Mammary epithelial cell (primary cell): ENCODE measurements at regions of chr14 and their contacts with region 1.

Region 1: DNA sequence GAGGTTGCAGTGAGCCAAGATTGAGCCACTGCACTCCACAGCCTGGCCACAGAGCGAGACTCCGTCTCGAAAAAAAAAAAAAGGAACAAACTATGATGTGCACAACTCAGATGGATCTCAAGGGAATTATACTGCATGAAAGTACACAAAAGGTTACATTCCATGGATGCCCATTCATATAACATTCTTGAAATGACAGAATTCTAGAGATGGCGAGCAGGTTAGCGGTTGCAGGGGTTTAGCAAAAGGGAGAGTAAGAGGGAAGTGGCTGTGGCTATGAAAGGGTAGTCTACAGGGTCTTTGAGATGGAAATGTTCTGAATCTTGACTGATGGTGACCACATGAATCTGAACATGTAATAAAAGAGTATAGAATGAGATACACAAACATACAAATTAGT is 49.7 kb downstream of the CKB start:
- DNase-seq: no peak
- H3K4me3 ChIP-seq: no peak overlapping the region
- H3K27ac ChIP-seq: no peak overlapping the region
- H3K4me1 ChIP-seq: no peaks in the 10 kb centered on the region
- H3K27me3 ChIP-seq: no peaks in the 10 kb centered on the region
- CTCF ChIP-seq: no peak

Region 2: GRCh38 chr14:102524466-102525218 is 948.3 kb before region 1 on chr14:
- CTCF ChIA-PET with region 1: no interaction called
- dilution Hi-C with region 1: no loop called
- in situ Hi-C with region 1: no loop called
- intact Hi-C with region 1: no loop called
- DNase-seq: peak; percentile 98
- H3K4me3 ChIP-seq: peak overlapping the region; percentile 32 to 74 (median 56)
- H3K27ac ChIP-seq: peak overlapping the region; percentile 84
- H3K4me1 ChIP-seq: peaks cover 33% of the 10 kb centered on the region
- H3K27me3 ChIP-seq: no peaks in the 10 kb centered on the region
- CTCF ChIP-seq: peak; percentile 83 to 96

Region 3: GRCh38 chr14:103292426-103293374 is 180.2 kb before region 1 on chr14:
- CTCF ChIA-PET with region 1: no interaction called
- dilution Hi-C with region 1: no loop called
- in situ Hi-C with region 1: no loop called
- intact Hi-C with region 1: no loop called
- DNase-seq: peak; percentile 41
- H3K4me3 ChIP-seq: no peak overlapping the region
- H3K27ac ChIP-seq: no peak overlapping the region
- H3K4me1 ChIP-seq: peaks cover 6% of the 10 kb centered on the region
- H3K27me3 ChIP-seq: no peaks in the 10 kb centered on the region
- CTCF ChIP-seq: peak; percentile 91 to 97

Region 4: DNA sequence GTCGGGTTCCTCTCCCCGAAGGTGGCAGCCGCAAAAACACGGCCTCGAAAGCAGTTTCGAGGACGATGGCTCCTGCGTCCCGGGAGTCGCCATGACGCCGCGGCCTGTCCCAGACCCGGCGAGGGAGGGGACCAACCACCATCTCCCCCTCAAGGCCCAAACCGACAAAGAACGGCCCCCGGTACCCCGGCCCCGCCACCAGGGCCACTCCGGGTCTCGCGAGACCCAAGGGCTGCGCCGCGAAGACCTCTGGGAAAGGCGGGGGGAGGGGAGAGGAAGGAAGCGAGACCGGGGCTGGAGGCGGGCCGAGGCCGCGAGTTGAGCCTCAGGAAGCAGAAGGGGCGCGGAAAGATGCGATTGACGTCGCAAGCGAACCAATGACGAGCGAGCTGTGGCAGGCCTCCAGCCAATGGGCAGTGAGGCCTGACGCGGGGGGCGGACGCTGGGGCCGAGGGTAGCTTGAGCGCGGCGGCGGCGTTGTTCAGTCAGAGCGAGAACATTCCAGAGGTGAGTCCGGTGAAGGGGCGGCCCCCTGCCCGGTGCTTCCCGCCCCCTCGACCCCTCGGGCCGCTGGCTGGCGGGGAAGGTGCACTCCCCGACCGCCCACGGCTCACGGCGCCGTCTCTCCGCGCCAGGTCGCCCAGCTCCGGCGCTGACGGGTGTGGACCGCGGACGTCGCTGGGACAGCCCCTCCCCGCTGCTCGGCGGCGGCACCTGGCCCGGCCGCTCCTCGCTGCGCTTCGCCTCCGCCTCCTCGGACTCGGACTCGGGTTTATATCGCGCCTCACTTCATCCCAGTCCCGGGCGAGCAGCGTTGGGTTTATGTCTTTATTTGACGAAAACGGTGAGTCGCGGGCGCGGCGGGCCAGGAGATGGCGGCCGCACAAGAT is 138.9 kb before region 1 on chr14 and contains the start of gene EIF5:
- CTCF ChIA-PET with region 1: no interaction called
- dilution Hi-C with region 1: loop called (anchors 5 kb)
- in situ Hi-C with region 1: no loop called
- intact Hi-C with region 1: loop called (anchors 5 kb)
- DNase-seq: peak; percentile 98
- H3K4me3 ChIP-seq: peak within 1 kb of the TSS; percentile 83 to 95 (median 87)
- H3K27ac ChIP-seq: peak within 1 kb of the TSS; percentile 94
- H3K4me1 ChIP-seq: peaks cover 19% of the 10 kb centered on the region
- H3K27me3 ChIP-seq: no peaks in the 10 kb centered on the region
- CTCF ChIP-seq: peak in 1 of 2 donors; percentile 35
- total RNA-seq, gene EIF5: 142 to 333 TPM